ENCODE measurements at regions of chr22 and their contacts with region 1.

Region 1: GRCh38 chr22:39319270-39320022 is at the start of gene RPL3:
- DNase-seq: peak; percentile 97

Region 2: GRCh38 chr22:39152511-39153219 is 166.8 kb before region 1 on chr22 and contains the start of gene CBX7:
- CTCF ChIA-PET with region 1: interaction called, 5 read pairs
- POLR2A ChIA-PET with region 1: interaction called, 59 read pairs
- DNase-seq: peak; percentile 99

Region 3: DNA sequence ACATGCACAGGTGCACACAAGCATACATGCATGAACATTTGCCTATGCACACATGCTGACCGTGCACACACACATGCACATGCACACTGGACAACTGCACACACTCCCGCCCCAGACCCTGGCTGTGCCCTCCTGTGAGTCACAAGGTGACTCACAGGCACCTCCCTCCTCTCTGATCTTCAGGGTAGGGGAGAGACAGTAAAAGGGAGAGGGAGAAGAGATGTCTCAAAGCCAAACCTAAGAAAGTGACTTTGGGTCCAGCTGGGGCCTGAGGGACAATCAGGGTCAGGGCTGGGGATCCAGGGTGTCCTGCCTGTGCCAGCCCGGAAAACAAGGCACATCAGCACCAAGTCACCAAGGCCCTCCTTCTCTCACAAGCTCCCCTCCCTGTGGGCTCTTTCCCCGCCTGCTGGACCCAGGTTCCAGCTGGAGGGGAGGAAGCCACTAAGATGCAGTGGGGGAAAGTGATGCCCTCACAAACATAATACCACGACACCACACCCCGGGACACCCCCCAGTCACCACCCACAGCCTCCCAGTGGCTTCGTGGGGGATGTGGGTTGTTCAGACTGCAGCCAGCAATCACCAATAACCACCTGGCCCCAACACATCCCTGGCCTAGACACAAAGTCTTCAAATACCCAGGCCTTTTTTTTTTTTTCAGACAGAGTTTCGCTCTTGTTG is 114.0 kb before region 1 on chr22:
- CTCF ChIA-PET with region 1: no interaction called
- POLR2A ChIA-PET with region 1: interaction called, 17 read pairs
- DNase-seq: no peak

Region 4: GRCh38 chr22:39306581-39307361 is 12.7 kb before region 1 on chr22:
- CTCF ChIA-PET with region 1: no interaction called
- POLR2A ChIA-PET with region 1: interaction called, 35 read pairs
- DNase-seq: no peak

Region 5: GRCh38 chr22:39368461-39368911 is 49.0 kb after region 1 on chr22:
- CTCF ChIA-PET with region 1: no interaction called
- POLR2A ChIA-PET with region 1: interaction called, 14 read pairs
- DNase-seq: no peak

Region 6: GRCh38 chr22:39490135-39490798 is 170.8 kb after region 1 on chr22:
- CTCF ChIA-PET with region 1: no interaction called
- POLR2A ChIA-PET with region 1: interaction called, 12 read pairs
- DNase-seq: peak; percentile 93

Region 7: GRCh38 chr22:39532215-39533071 is 213.0 kb after region 1 on chr22 and contains the start of gene RPS19BP1:
- CTCF ChIA-PET with region 1: interaction called, 4 read pairs
- POLR2A ChIA-PET with region 1: interaction called, 18 read pairs
- DNase-seq: peak; percentile 96

Measured in HEK293T (cell line).